ENCODE measurements at regions of chr16 and their contacts with region 1.

Region 1: DNA sequence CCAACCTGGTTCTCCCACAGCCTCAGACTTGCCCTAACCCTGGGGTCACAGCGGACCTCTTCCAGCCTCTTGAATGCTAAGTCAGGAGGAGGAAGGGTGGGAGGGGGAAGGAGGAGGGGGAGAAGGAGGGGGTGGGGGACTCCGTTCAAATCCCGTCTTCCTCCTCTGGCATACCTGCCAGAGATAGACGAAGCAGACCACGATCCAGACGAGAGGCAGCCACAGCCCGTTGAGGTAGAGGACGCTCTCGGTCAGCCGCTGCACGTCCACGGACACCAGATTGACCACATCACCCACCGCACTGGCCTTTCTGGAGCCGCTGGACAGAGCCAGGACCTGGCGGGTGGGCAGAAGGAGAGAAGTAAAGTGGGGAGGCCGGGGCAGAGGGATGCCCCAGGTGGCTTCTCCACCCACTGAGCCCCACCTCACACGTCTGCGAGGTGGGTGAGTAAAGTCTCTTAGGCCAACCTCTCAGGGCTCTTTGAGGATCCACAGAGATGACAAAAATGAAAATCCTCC is 25.4 kb downstream of the ABCC6 start:
- DNase-seq: no peak
- H3K4me3 ChIP-seq: no peak overlapping the region
- H3K27ac ChIP-seq: no peak overlapping the region
- H3K27me3 ChIP-seq: no peaks in the 10 kb centered on the region
- CTCF ChIP-seq: no peak

Region 2: GRCh38 chr16:15798671-15799070 is 399.2 kb before region 1 on chr16:
- intact Hi-C with region 1: no loop called
- DNase-seq: no peak
- H3K4me3 ChIP-seq: no peak overlapping the region
- H3K27ac ChIP-seq: no peak overlapping the region
- H3K27me3 ChIP-seq: peaks cover 0 to 2% (median 0%) of the 10 kb centered on the region in 45 donors
- CTCF ChIP-seq: no peak

Region 3: DNA sequence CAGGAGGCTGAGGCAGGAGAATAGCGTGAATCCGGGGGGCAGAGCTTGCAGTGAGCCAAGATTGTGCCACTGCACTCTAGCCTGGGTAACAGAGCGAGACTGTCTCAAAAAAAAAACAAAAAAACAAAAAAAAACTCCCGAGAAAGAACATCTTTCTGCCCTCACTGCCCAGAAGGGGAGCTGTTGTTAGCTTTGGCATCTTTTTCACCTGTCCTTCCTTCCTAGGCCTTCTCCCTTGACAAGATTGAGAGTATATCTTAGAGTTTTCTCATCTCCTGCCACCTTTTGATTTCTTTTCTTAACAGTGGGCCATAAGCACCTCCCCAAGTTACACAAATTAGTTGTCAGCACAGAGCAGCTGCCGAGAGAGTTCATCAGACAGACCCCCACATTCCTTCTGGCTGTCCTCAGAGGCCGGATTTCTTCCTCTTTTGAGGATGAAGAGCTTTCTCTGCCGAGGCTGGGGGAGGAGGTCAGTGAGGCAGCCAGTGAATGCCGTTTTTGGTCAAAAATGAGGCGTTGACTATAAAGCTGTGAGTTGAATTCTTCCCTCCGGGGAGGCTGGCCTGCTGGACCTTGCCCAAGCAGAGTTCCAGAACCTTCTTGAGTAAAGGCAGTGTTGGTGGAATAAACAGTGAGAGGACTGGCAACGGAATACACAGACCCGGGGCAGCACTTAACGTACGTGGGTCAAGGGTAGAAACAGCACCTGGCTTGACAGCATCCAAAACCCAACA is 101.6 kb before region 1 on chr16:
- intact Hi-C with region 1: no loop called
- DNase-seq: no peak
- H3K4me3 ChIP-seq: no peak overlapping the region
- H3K27ac ChIP-seq: peak overlapping the region in 1 of 59 donors; percentile 11
- H3K27me3 ChIP-seq: no peaks in the 10 kb centered on the region
- CTCF ChIP-seq: peak in 2 of 56 donors; percentile 5 to 30

Region 4: DNA sequence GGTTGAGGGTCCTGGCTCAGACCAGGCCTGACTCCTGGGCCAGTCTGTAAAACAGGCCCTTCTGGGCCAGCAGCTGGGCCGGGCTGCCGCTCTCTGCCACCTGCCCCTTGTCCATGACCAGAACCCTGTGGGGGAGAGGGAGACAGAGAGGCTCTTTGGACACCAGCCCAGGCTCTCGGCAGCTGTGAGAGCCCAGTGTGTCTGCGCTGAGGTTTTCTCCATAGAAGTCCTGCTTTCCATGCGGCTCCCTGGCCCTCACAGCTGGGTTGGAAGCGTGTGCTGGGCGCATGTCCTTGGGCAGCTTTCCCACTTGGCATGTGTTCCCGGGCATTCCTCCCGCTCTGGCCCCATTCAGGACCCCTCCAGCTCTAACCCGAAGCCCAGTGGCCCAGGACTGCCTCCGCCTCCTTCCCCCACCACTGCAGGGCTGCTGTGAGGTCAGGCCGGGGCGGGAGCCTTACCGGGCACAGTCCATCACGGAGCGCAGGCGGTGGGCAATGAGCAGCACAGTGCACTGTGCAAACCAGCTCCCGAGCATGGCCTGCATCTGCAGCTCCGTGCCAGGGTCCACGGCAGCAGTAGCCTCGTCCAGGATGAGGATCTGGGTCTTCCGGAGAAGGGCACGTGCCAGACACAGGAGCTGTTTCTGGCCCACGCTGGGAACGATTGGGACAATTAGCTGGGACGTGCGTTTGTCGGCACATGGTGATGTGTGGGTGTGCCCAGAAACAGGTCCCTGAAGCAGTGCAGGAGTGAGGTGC is 47.6 kb before region 1 on chr16:
- intact Hi-C with region 1: loop called in 1 of 2 experiments (anchors 5 kb)
- DNase-seq: peak; percentile 26 to 93 (median 86)
- H3K4me3 ChIP-seq: peak overlapping the region in 6 of 59 donors; percentile 4 to 26 (median 15)
- H3K27ac ChIP-seq: peak overlapping the region in 7 of 59 donors; percentile 4 to 57 (median 28)
- H3K27me3 ChIP-seq: peaks cover 0 to 18% (median 0%) of the 10 kb centered on the region in 45 donors
- CTCF ChIP-seq: peak in 10 of 56 donors; percentile 3 to 27 (median 14)